Activated CD8-positive, alpha-beta T cell treated with anti-CD3 and anti-CD28 coated beads, Interleukin-2, amount 10 ng/mL, durations not matched to agents 7 days and 5 days (primary cell): ENCODE measurements at regions of chr6 and their contacts with region 1.

Region 1: GRCh38 chr6:138455746-138456400 is 43.4 kb downstream of the NHSL1 start:
- DNase-seq: peak; percentile 51
- ATAC-seq: peak; percentile 83
- H3K4me3 Mint-ChIP-seq: peak overlapping the region; percentile 58
- H3K27ac Mint-ChIP-seq: peak overlapping the region; percentile 91
- H3K4me1 Mint-ChIP-seq: peaks cover 29% of the 10 kb centered on the region
- H3K27me3 Mint-ChIP-seq: peaks cover 2% of the 10 kb centered on the region

Region 2: GRCh38 chr6:138428944-138429598 is 26.8 kb before region 1 on chr6:
- CTCF ChIA-PET with region 1: interaction called, 10 read pairs
- POLR2A ChIA-PET with region 1: no interaction called
- DNase-seq: peak; percentile 34
- ATAC-seq: peak; percentile 58
- H3K4me3 Mint-ChIP-seq: no peak overlapping the region
- H3K27ac Mint-ChIP-seq: no peak overlapping the region
- H3K4me1 Mint-ChIP-seq: peaks cover 2% of the 10 kb centered on the region
- H3K27me3 Mint-ChIP-seq: no peaks in the 10 kb centered on the region